Naive thymus-derived CD4-positive, alpha-beta T cell (primary cell): ENCODE measurements at regions of chrX and their contacts with region 1.

Region 1: DNA sequence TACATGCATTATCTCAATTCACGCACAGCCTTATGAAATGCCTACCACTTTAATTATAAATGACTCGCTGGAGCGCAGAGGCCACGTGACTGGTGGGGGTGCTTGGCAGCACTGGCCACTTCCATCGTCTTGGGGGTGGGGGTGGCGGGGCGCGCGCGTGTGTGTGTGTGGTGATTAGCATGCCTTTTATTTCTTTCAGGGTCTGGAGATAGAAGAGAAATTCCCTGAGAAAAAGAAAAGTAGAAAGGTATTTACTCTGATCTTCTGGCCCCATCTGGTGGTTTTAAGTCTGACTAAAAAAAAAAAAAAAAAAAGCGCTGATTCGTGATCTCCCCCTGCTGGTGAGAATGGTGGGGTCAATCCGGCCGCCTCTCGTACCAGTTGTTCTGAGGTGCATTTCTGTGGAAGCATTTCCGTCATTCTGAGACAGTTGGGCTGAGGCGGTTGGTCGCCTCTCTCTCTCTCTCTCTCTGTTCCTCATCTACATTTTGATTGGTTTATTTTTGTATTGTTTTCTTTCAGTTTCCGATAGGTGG is at the start of gene CCNB3:
- DNase-seq: peak; percentile 26 to 80 (median 67)
- ATAC-seq: peak; percentile 99
- H3K4me3 ChIP-seq: peak within 1 kb of the TSS; percentile 55
- H3K4me3 Mint-ChIP-seq: peak within 1 kb of the TSS; percentile 68 to 89 (median 86)
- H3K27ac ChIP-seq: peak within 1 kb of the TSS; percentile 58
- H3K27ac Mint-ChIP-seq: peak within 1 kb of the TSS; percentile 65 to 93 (median 90)
- H3K4me1 ChIP-seq: peaks cover 6 to 7% of the 10 kb centered on the region in 2 donors
- H3K4me1 Mint-ChIP-seq: peaks cover 0 to 17% (median 17%) of the 10 kb centered on the region in 7 donors
- H3K27me3 ChIP-seq: no peaks in the 10 kb centered on the region
- H3K27me3 Mint-ChIP-seq: no peaks in the 10 kb centered on the region
- total RNA-seq, gene CCNB3: 0.22 to 2.3 (median 0.31) TPM

Region 2: GRCh38 chrX:49922291-49923241 is 281.9 kb before region 1 on chrX and contains the start of gene CLCN5:
- CTCF ChIA-PET with region 1: no interaction called
- POLR2A ChIA-PET with region 1: no interaction called
- intact Hi-C with region 1: loop called (anchors 1 kb)
- DNase-seq: peak; percentile 85 to 96 (median 94)
- ATAC-seq: peak; percentile 97
- H3K4me3 ChIP-seq: peak within 1 kb of the TSS; percentile 74
- H3K4me3 Mint-ChIP-seq: peak within 1 kb of the TSS; percentile 76 to 86 (median 83)
- H3K27ac ChIP-seq: peak within 1 kb of the TSS; percentile 61
- H3K27ac Mint-ChIP-seq: peak within 1 kb of the TSS; percentile 43 to 85 (median 57)
- H3K4me1 ChIP-seq: peaks cover 0 to 5% of the 10 kb centered on the region in 2 donors
- H3K4me1 Mint-ChIP-seq: peaks cover 0 to 16% (median 8%) of the 10 kb centered on the region in 7 donors
- H3K27me3 ChIP-seq: no peaks in the 10 kb centered on the region
- H3K27me3 Mint-ChIP-seq: no peaks in the 10 kb centered on the region
- total RNA-seq, gene CLCN5: 2.8 to 3.9 (median 3.8) TPM

Region 3: DNA sequence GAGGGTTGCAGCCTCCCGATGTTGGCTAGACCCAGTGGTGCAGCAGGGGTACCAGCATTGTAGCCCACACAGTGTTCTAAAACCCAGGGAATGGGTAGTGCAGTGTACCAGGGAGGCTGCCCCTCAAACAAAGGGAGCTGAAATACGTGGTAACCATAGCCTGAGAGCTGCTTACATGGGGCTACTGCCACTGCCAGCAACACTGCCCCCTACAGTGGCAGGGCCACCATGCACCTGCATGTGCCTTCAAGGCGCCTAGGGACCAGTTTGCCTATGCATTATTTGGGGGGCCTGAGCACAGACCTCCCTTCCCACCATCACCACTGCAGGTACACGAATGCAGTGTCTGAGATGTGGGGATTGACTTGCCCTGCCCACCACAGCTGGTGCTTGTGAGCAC is 685.1 kb after region 1 on chrX:
- CTCF ChIA-PET with region 1: no interaction called
- POLR2A ChIA-PET with region 1: no interaction called
- intact Hi-C with region 1: no loop called
- DNase-seq: no peak
- ATAC-seq: no peak
- H3K4me3 ChIP-seq: no peak overlapping the region
- H3K4me3 Mint-ChIP-seq: no peak overlapping the region
- H3K27ac ChIP-seq: no peak overlapping the region
- H3K27ac Mint-ChIP-seq: no peak overlapping the region
- H3K4me1 ChIP-seq: no peaks in the 10 kb centered on the region
- H3K4me1 Mint-ChIP-seq: no peaks in the 10 kb centered on the region
- H3K27me3 ChIP-seq: no peaks in the 10 kb centered on the region
- H3K27me3 Mint-ChIP-seq: peaks cover 0 to 30% (median 9%) of the 10 kb centered on the region in 5 donors